Naive thymus-derived CD4-positive, alpha-beta T cell (primary cell): ENCODE measurements at regions of chr16 and their contacts with region 1.

Region 1: GRCh38 chr16:68528686-68529379 is 10.3 kb upstream of the ZFP90 start:
- DNase-seq: peak; percentile 80 to 91 (median 87)
- ATAC-seq: peak; percentile 92
- H3K4me3 ChIP-seq: no peak overlapping the region
- H3K4me3 Mint-ChIP-seq: peak overlapping the region; percentile 71 to 95 (median 90)
- H3K27ac ChIP-seq: no peak overlapping the region
- H3K27ac Mint-ChIP-seq: peak overlapping the region; percentile 45 to 94 (median 82)
- H3K4me1 ChIP-seq: peaks cover 7 to 19% of the 10 kb centered on the region in 2 donors
- H3K4me1 Mint-ChIP-seq: peaks cover 13 to 24% (median 21%) of the 10 kb centered on the region in 7 donors
- H3K27me3 ChIP-seq: no peaks in the 10 kb centered on the region
- H3K27me3 Mint-ChIP-seq: peaks cover 0 to 2% (median 0%) of the 10 kb centered on the region in 5 donors

Region 2: GRCh38 chr16:68548947-68549346 is 20.1 kb after region 1 on chr16:
- CTCF ChIA-PET with region 1: interaction called, 3 read pairs
- POLR2A ChIA-PET with region 1: no interaction called
- intact Hi-C with region 1: loop called in 1 of 2 experiments (anchors 1 kb)
- DNase-seq: peak in 7 of 9 donors; percentile 49 to 82 (median 73)
- ATAC-seq: peak; percentile 98
- H3K4me3 ChIP-seq: no peak overlapping the region
- H3K4me3 Mint-ChIP-seq: peak overlapping the region in 9 of 10 donors; percentile 29 to 74 (median 60)
- H3K27ac ChIP-seq: peak overlapping the region; percentile 11
- H3K27ac Mint-ChIP-seq: peak overlapping the region; percentile 57 to 97 (median 91)
- H3K4me1 ChIP-seq: peaks cover 7% of the 10 kb centered on the region in 2 donors
- H3K4me1 Mint-ChIP-seq: peaks cover 10 to 29% (median 25%) of the 10 kb centered on the region in 7 donors
- H3K27me3 ChIP-seq: no peaks in the 10 kb centered on the region
- H3K27me3 Mint-ChIP-seq: no peaks in the 10 kb centered on the region

Region 3: GRCh38 chr16:68696514-68696913 is 167.7 kb after region 1 on chr16:
- CTCF ChIA-PET with region 1: no interaction called
- POLR2A ChIA-PET with region 1: no interaction called
- intact Hi-C with region 1: loop called in 1 of 2 experiments (anchors 2 kb)
- DNase-seq: no peak
- ATAC-seq: no peak
- H3K4me3 ChIP-seq: no peak overlapping the region
- H3K4me3 Mint-ChIP-seq: no peak overlapping the region
- H3K27ac ChIP-seq: no peak overlapping the region
- H3K27ac Mint-ChIP-seq: no peak overlapping the region
- H3K4me1 ChIP-seq: no peaks in the 10 kb centered on the region
- H3K4me1 Mint-ChIP-seq: peaks cover 0 to 2% (median 0%) of the 10 kb centered on the region in 7 donors
- H3K27me3 ChIP-seq: no peaks in the 10 kb centered on the region
- H3K27me3 Mint-ChIP-seq: peaks cover 0 to 3% (median 0%) of the 10 kb centered on the region in 5 donors

Region 4: GRCh38 chr16:68843482-68844210 is 314.8 kb after region 1 on chr16 and contains the start of gene TANGO6:
- CTCF ChIA-PET with region 1: interaction called, 4 read pairs
- POLR2A ChIA-PET with region 1: no interaction called
- intact Hi-C with region 1: loop called (anchors 1 kb)
- DNase-seq: peak; percentile 83 to 94 (median 89)
- ATAC-seq: peak; percentile 98
- H3K4me3 ChIP-seq: peak within 1 kb of the TSS; percentile 86
- H3K4me3 Mint-ChIP-seq: peak within 1 kb of the TSS; percentile 81 to 99 (median 88)
- H3K27ac ChIP-seq: peak within 1 kb of the TSS; percentile 85
- H3K27ac Mint-ChIP-seq: peak within 1 kb of the TSS; percentile 69 to 97 (median 90)
- H3K4me1 ChIP-seq: peaks cover 7 to 15% of the 10 kb centered on the region in 2 donors
- H3K4me1 Mint-ChIP-seq: peaks cover 20 to 41% (median 30%) of the 10 kb centered on the region in 7 donors
- H3K27me3 ChIP-seq: no peaks in the 10 kb centered on the region
- H3K27me3 Mint-ChIP-seq: no peaks in the 10 kb centered on the region
- total RNA-seq, gene TANGO6: 23.9 to 40.4 (median 36.6) TPM

Region 5: GRCh38 chr16:69132424-69133252 is 603.8 kb after region 1 on chr16 and contains the starts of genes CHTF8 and UTP4:
- CTCF ChIA-PET with region 1: interaction called, 4 read pairs
- POLR2A ChIA-PET with region 1: no interaction called
- intact Hi-C with region 1: loop called in 1 of 2 experiments (anchors 1 kb)
- DNase-seq: peak; percentile 81 to 91 (median 87)
- ATAC-seq: peak; percentile 95
- H3K4me3 ChIP-seq: peak within 1 kb of the TSS; percentile 80
- H3K4me3 Mint-ChIP-seq: peak within 1 kb of the TSS; percentile 91 to 97 (median 94)
- H3K27ac ChIP-seq: peak within 1 kb of the TSS; percentile 88
- H3K27ac Mint-ChIP-seq: peak within 1 kb of the TSS; percentile 85 to 97 (median 95)
- H3K4me1 ChIP-seq: peaks cover 12 to 23% of the 10 kb centered on the region in 2 donors
- H3K4me1 Mint-ChIP-seq: peaks cover 16 to 71% (median 61%) of the 10 kb centered on the region in 7 donors
- H3K27me3 ChIP-seq: no peaks in the 10 kb centered on the region
- H3K27me3 Mint-ChIP-seq: no peaks in the 10 kb centered on the region
- total RNA-seq, gene CHTF8: 53.3 to 142 (median 133) TPM
- total RNA-seq, gene UTP4: 31.9 to 56.5 (median 35.1) TPM

Region 6: GRCh38 chr16:70151391-70151790 is 1622.6 kb after region 1 on chr16:
- CTCF ChIA-PET with region 1: no interaction called
- POLR2A ChIA-PET with region 1: no interaction called
- intact Hi-C with region 1: no loop called
- DNase-seq: no peak
- ATAC-seq: no peak
- H3K4me3 ChIP-seq: no peak overlapping the region
- H3K4me3 Mint-ChIP-seq: no peak overlapping the region
- H3K27ac ChIP-seq: no peak overlapping the region
- H3K27ac Mint-ChIP-seq: peak overlapping the region in 1 of 9 donors; percentile 28
- H3K4me1 ChIP-seq: no peaks in the 10 kb centered on the region
- H3K4me1 Mint-ChIP-seq: peaks cover 0 to 3% (median 0%) of the 10 kb centered on the region in 7 donors
- H3K27me3 ChIP-seq: no peaks in the 10 kb centered on the region
- H3K27me3 Mint-ChIP-seq: no peaks in the 10 kb centered on the region